Naive thymus-derived CD4-positive, alpha-beta T cell (primary cell): ENCODE measurements at regions of chr14 and their contacts with region 1.

Region 1: GRCh38 chr14:99793213-99794150 is at the start of gene EML1:
- DNase-seq: peak; percentile 55 to 84 (median 72)
- ATAC-seq: peak; percentile 88
- H3K4me3 ChIP-seq: peak within 1 kb of the TSS; percentile 38
- H3K4me3 Mint-ChIP-seq: peak within 1 kb of the TSS; percentile 69 to 85 (median 79)
- H3K27ac ChIP-seq: no peak within 1 kb of the TSS
- H3K27ac Mint-ChIP-seq: peak within 1 kb of the TSS in 7 of 9 donors; percentile 12 to 69 (median 48)
- H3K4me1 ChIP-seq: peaks cover 0 to 4% of the 10 kb centered on the region in 2 donors
- H3K4me1 Mint-ChIP-seq: peaks cover 5 to 34% (median 21%) of the 10 kb centered on the region in 7 donors
- H3K27me3 ChIP-seq: peaks cover 0 to 5% of the 10 kb centered on the region in 2 donors
- H3K27me3 Mint-ChIP-seq: peaks cover 0 to 66% (median 27%) of the 10 kb centered on the region in 5 donors
- total RNA-seq, gene EML1: not detected

Region 2: GRCh38 chr14:99480917-99481744 is 312.4 kb before region 1 on chr14 and contains the start of gene CCNK:
- CTCF ChIA-PET with region 1: no interaction called
- POLR2A ChIA-PET with region 1: no interaction called
- intact Hi-C with region 1: loop called in 1 of 2 experiments (anchors 1 kb)
- DNase-seq: peak; percentile 98 to 100 (median 100)
- ATAC-seq: peak; percentile 92
- H3K4me3 ChIP-seq: peak within 1 kb of the TSS; percentile 86
- H3K4me3 Mint-ChIP-seq: peak within 1 kb of the TSS; percentile 89 to 100 (median 98)
- H3K27ac ChIP-seq: peak within 1 kb of the TSS; percentile 93
- H3K27ac Mint-ChIP-seq: peak within 1 kb of the TSS; percentile 95 to 99 (median 98)
- H3K4me1 ChIP-seq: peaks cover 26 to 34% of the 10 kb centered on the region in 2 donors
- H3K4me1 Mint-ChIP-seq: peaks cover 44 to 79% (median 70%) of the 10 kb centered on the region in 7 donors
- H3K27me3 ChIP-seq: no peaks in the 10 kb centered on the region
- H3K27me3 Mint-ChIP-seq: no peaks in the 10 kb centered on the region
- total RNA-seq, gene CCNK: 68.4 to 139 (median 81.9) TPM

Region 3: DNA sequence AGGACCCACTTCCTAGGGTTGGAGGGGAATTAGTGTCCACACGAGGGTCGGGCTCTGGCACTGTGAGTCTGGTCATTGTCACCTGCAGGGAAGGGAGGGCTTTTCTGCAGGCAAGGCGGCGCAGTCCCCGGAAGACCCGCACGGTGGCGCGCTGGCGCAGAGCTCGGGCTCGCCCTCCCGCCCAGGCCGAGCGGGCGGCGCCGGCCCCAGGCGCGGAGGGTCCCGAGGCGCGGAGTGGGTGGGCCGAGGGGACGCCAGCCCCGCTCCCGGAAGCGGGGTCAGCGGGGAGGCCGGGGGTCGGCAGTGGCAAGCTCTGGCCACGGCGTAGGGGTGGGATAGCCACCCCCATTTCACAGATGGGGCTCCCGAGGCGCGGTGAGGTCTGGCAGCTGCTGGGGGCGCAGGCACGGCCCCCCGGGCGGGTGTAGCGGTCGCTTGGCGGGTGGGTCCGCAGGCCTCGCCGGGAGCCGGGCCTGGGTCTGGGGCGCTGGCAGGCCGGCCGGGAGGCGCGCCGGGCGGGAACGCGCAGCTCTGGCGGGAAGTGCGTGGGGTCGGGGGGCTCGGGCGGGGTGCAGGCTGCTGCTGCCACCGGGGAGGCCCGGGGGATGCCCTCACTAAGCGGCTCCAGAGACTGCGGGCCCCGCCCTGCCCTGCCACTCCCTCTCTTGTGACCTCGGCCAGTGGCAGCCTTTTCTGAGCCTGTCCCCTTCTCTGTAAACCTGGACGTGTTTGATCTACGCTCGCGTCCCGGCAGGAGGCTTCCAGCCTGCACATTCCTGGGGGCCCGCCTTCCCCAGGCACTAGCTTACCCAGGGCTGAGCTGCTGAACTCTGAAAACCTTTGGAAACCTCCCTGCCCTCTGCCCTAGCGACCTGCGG is 63.3 kb before region 1 on chr14:
- CTCF ChIA-PET with region 1: interaction called, 3 read pairs
- POLR2A ChIA-PET with region 1: no interaction called
- intact Hi-C with region 1: loop called in 1 of 2 experiments (anchors 1 kb)
- DNase-seq: peak; percentile 26 to 85 (median 53)
- ATAC-seq: peak; percentile 71
- H3K4me3 ChIP-seq: no peak overlapping the region
- H3K4me3 Mint-ChIP-seq: peak overlapping the region in 8 of 10 donors; percentile 13 to 75 (median 50)
- H3K27ac ChIP-seq: no peak overlapping the region
- H3K27ac Mint-ChIP-seq: no peak overlapping the region
- H3K4me1 ChIP-seq: no peaks in the 10 kb centered on the region
- H3K4me1 Mint-ChIP-seq: peaks cover 0 to 6% (median 0%) of the 10 kb centered on the region in 7 donors
- H3K27me3 ChIP-seq: no peaks in the 10 kb centered on the region
- H3K27me3 Mint-ChIP-seq: peaks cover 7 to 45% (median 20%) of the 10 kb centered on the region in 5 donors